Pancreas (tissue), 10 donors: ENCODE measurements at regions of chr13 and their contacts with region 1.

Region 1: GRCh38 chr13:44048323-44048722 is 168.6 kb downstream of the LACC1 start:
- DNase-seq: no peak
- ATAC-seq: no peak
- H3K4me3 ChIP-seq: no peak overlapping the region
- H3K27ac ChIP-seq: no peak overlapping the region
- H3K4me1 ChIP-seq: peaks cover 0 to 14% (median 5%) of the 10 kb centered on the region in 3 donors
- H3K27me3 ChIP-seq: no peaks in the 10 kb centered on the region
- CTCF ChIP-seq: peak in 1 of 4 donors; percentile 9

Region 2: DNA sequence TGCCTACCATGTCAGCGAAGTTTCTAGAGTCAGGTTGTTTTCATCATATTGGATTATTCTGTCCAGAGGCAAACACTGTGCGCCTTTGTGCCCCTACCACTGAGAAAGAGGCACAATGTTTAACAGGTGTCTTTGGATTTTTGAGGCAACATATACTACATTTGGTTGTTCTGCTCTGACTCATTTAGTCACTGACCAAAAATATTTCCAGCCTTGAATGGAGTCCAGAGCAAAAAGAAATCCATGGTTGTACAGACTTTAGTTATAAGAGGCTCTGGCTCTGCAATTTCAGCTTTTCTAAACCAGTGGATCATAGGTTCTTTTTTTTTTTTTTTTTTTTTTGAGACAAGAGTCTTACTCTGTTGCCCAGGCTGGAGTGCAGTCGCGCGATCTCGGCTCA is 132.9 kb before region 1 on chr13:
- intact Hi-C with region 1: loop called in 1 of 3 experiments (anchors 10 kb)
- DNase-seq: no peak
- ATAC-seq: peak in 1 of 4 donors; percentile 24
- H3K4me3 ChIP-seq: no peak overlapping the region
- H3K27ac ChIP-seq: no peak overlapping the region
- H3K4me1 ChIP-seq: no peaks in the 10 kb centered on the region
- H3K27me3 ChIP-seq: no peaks in the 10 kb centered on the region
- CTCF ChIP-seq: no peak

Region 3: DNA sequence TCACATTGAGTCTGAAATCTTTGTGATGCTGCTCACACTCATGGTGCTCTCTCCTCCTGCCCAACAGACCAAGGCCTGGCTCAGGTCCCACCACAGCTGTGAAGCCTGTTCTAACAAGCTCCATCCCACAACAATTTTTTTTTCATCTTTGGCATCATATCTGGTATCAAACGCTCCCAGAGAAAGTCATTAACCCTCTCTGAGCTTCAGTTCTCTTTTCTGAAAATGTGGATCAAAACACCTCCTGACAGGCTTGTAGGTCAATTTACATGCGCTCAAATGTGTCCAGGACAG is 55.8 kb after region 1 on chr13:
- intact Hi-C with region 1: no loop called
- DNase-seq: no peak
- ATAC-seq: no peak
- H3K4me3 ChIP-seq: no peak overlapping the region
- H3K27ac ChIP-seq: no peak overlapping the region
- H3K4me1 ChIP-seq: no peaks in the 10 kb centered on the region
- H3K27me3 ChIP-seq: no peaks in the 10 kb centered on the region
- CTCF ChIP-seq: no peak

Region 4: GRCh38 chr13:44435142-44435982 is 387.0 kb after region 1 on chr13:
- intact Hi-C with region 1: loop called in 1 of 3 experiments (anchors 5 kb)
- DNase-seq: peak; percentile 95 to 99 (median 97)
- ATAC-seq: peak; percentile 78 to 86 (median 84)
- H3K4me3 ChIP-seq: peak overlapping the region; percentile 45 to 77 (median 50)
- H3K27ac ChIP-seq: peak overlapping the region; percentile 85 to 99 (median 92)
- H3K4me1 ChIP-seq: peaks cover 10 to 36% (median 11%) of the 10 kb centered on the region in 3 donors
- H3K27me3 ChIP-seq: no peaks in the 10 kb centered on the region
- CTCF ChIP-seq: no peak